ENCODE measurements at regions of chr1 and their contacts with region 1.

Region 1: DNA sequence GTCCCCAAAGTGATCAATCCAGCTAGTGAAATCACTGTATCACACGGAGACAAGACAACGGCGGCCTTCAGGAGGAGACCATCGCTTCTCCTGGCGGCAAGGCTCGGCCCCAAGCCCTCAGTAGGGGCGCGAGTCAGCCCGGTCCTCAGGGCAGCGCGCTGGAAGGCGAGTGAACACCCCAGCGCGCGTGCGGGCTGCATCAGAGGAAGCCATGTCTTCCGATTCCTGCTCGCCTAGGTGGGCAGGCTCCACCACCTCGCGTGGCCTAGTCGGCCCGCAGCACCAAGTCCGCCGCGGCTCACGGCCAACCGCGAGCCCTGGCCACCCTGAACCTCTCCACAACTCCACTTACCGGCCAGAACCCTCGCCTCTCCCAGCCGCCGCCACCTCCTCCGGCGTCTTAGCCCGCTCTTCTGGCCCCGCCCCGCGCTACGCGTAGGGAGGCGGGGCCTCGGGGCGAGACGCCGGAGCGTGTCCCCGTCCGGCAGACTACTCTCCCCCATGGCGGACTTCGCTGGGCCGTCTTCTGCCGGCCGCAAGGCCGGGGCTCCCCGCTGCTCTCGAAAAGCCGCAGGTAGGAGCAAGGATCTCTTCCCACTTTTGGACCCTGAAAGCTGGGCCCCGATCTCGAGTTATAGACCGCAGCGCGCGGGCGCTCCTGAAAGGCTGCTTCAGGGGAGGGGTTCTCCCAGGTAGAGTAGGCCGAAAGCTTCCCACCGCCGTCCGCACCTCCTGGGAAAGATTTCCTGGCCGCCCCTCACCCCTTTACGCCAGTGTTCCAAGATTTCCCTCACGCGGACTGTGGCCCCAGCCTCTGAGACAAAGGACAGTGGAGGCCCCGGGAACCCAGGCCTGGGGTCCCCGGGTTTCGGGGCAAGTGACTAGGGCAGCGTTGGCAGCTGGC is at the starts of genes GLMN and RPAP2:
- DNase-seq: peak; percentile 45
- ATAC-seq: peak; percentile 97
- H3K4me3 ChIP-seq: peak within 1 kb of the TSS; percentile 99
- H3K27ac ChIP-seq: peak within 1 kb of the TSS; percentile 93
- H3K4me1 ChIP-seq: no peaks in the 10 kb centered on the region
- H3K27me3 ChIP-seq: no peaks in the 10 kb centered on the region
- CTCF ChIP-seq: 0 out of 6 replicates have a peak, but pooled peaks of 1 of the 3 experiments have one; percentile 13
- EP300 ChIP-seq: no peak
- POLR2A ChIP-seq: peak; percentile 99
- RAD21 ChIP-seq: no peak
- polyA plus RNA-seq, gene GLMN: 18.2 to 20.6 TPM
- polyA plus RNA-seq, gene RPAP2: 20.2 to 24.0 TPM

Region 2: DNA sequence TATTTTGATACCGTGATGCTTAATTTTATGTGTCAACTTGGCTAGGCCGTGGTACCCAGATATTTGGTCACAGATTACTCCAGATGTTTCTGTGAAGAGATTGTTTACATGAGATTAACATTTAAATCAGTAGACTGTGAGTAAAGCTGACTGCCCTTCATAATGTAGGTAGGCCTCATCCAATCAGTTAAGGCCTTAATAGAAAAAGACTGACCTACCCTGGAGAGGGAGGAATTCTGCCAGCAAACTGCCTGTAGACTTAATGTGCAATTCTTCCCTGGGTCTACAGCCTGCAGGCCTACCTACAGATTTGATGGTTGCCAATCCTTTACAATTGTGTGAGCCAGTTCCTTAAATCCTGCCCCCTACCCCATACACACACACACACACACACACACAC is 227.9 kb before region 1 on chr1:
- CTCF ChIA-PET with region 1: no interaction called
- POLR2A ChIA-PET with region 1: no interaction called
- RAD21 ChIA-PET with region 1: no interaction called
- SMC1A ChIA-PET with region 1: no interaction called
- in situ Hi-C with region 1: no loop called
- intact Hi-C with region 1: no loop called
- DNase-seq: no peak
- ATAC-seq: no peak
- H3K4me3 ChIP-seq: no peak overlapping the region
- H3K27ac ChIP-seq: no peak overlapping the region
- H3K4me1 ChIP-seq: no peaks in the 10 kb centered on the region
- H3K27me3 ChIP-seq: no peaks in the 10 kb centered on the region
- CTCF ChIP-seq: no peak
- EP300 ChIP-seq: no peak
- POLR2A ChIP-seq: no peak
- RAD21 ChIP-seq: no peak

Region 3: GRCh38 chr1:92317836-92318493 is 19.1 kb after region 1 on chr1:
- CTCF ChIA-PET with region 1: interaction called, 11 read pairs
- POLR2A ChIA-PET with region 1: interaction called, 3 read pairs
- RAD21 ChIA-PET with region 1: no interaction called
- SMC1A ChIA-PET with region 1: interaction called, 3 read pairs
- in situ Hi-C with region 1: no loop called
- intact Hi-C with region 1: no loop called
- DNase-seq: no peak
- ATAC-seq: no peak
- H3K4me3 ChIP-seq: no peak overlapping the region
- H3K27ac ChIP-seq: no peak overlapping the region
- H3K4me1 ChIP-seq: no peaks in the 10 kb centered on the region
- H3K27me3 ChIP-seq: no peaks in the 10 kb centered on the region
- CTCF ChIP-seq: no peak
- EP300 ChIP-seq: no peak
- POLR2A ChIP-seq: no peak
- RAD21 ChIP-seq: no peak

Region 4: GRCh38 chr1:92441697-92442342 is 143.0 kb after region 1 on chr1:
- CTCF ChIA-PET with region 1: no interaction called
- POLR2A ChIA-PET with region 1: no interaction called
- RAD21 ChIA-PET with region 1: no interaction called
- SMC1A ChIA-PET with region 1: no interaction called
- in situ Hi-C with region 1: no loop called
- intact Hi-C with region 1: no loop called
- DNase-seq: no peak
- ATAC-seq: no peak
- H3K4me3 ChIP-seq: no peak overlapping the region
- H3K27ac ChIP-seq: no peak overlapping the region
- H3K4me1 ChIP-seq: no peaks in the 10 kb centered on the region
- H3K27me3 ChIP-seq: no peaks in the 10 kb centered on the region
- CTCF ChIP-seq: no peak
- EP300 ChIP-seq: no peak
- POLR2A ChIP-seq: no peak
- RAD21 ChIP-seq: no peak

Measured in GM12878 (cell line).